ENCODE measurements at regions of chr7 and their contacts with region 1.

Region 1: DNA sequence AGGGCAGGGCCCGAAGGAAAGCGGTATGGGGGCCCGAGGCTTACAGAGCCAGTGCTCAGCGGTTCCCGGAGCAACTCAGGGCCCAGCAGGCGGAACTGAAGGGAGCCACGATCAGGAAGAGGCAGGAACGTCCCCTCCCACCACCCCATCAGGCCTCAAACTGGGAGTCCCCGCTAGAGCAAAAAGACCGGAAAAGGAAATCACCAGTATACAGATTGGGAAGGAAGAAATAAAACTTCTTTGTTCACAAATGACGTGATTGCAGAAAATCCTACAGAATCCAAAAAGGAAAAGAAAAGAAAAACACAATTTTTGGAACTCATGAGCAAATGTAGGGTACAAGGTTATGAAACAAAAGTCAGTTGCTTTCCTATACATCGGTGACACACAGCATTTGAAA is 21.6 kb upstream of the ZFAND2A start:
- DNase-seq: no peak
- H3K4me3 ChIP-seq: no peak overlapping the region
- H3K27ac ChIP-seq: no peak overlapping the region
- H3K4me1 ChIP-seq: no peaks in the 10 kb centered on the region; a peak in 1 of 4 replicates
- H3K27me3 ChIP-seq: peaks cover 25% of the 10 kb centered on the region
- CTCF ChIP-seq: no peak
- EP300 ChIP-seq: no peak
- RAD21 ChIP-seq: no peak

Region 2: DNA sequence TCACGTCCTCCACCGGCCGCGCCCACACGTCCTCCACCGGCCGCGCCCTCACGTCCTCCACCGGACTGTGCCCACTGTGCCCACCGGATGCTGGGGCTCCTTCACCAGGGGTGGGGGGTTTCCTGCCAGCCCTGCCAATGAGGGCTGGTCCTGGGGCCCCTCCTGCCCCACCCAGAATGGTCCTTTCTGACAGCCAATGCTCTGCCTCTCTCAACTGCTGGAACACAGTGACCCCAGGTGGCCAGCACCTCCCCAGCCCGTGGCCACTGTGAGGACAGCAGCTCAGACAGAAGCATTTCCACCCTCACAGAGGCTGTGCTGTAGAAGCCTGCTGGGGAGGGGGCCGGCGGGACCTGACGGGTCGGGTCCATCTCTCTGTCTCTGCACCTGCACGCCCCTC is 545.2 kb before region 1 on chr7:
- CTCF ChIA-PET with region 1: no interaction called
- POLR2A ChIA-PET with region 1: no interaction called
- DNase-seq: no peak
- H3K4me3 ChIP-seq: no peak overlapping the region
- H3K27ac ChIP-seq: no peak overlapping the region
- H3K4me1 ChIP-seq: peaks cover 0 to 6% of the 10 kb centered on the region in 2 experiments; a peak in 1 of 4 replicates
- H3K27me3 ChIP-seq: no peaks in the 10 kb centered on the region
- CTCF ChIP-seq: peak; percentile 50
- EP300 ChIP-seq: no peak
- RAD21 ChIP-seq: peak; percentile 14; the same call in 1 of the 2 replicates

Region 3: DNA sequence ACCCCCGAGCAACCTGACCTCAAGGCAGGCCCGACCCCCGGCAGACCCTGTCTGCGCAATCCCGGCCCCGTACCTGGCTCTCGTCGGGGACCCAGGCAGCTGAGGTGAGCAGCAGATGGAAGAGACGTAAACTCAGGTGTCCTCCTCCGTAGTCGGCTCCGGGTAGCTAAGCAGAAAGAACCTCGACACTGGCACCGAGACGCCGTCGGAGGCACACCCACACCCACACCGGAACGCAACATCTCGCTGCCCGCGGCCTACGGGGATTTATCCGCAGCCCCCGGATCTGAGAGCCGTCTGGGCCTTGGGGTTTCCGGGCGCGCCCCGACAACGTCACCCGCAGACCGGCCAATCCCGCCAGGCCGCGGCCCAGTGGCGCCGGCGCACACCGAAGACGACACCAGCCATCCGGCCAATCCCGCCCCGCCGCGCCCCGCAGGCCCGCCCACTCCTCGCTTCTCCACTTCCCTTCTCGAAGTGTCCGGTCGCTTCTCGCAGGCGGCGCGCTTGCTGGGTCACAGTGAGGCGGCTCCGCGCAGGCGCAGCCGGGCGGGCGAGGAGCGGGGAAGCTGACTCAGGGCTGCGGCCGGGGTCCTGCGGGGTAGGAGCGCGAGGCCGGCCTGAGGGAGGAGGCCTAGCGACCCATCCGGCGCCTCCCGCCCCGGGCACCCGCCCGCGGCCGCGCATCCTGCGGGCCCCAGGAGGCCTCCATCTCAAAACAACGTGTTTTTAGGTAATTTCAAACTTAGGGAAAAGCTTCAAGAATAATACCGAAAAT is 21.6 kb before region 1 on chr7 and contains the start of gene ZFAND2A:
- CTCF ChIA-PET with region 1: interaction called, 31 read pairs
- POLR2A ChIA-PET with region 1: no interaction called
- DNase-seq: peak; percentile 100
- H3K4me3 ChIP-seq: peak within 1 kb of the TSS; percentile 91 to 97
- H3K27ac ChIP-seq: peak within 1 kb of the TSS; percentile 81 to 94
- H3K4me1 ChIP-seq: peaks cover 14 to 16% of the 10 kb centered on the region in 2 experiments
- H3K27me3 ChIP-seq: no peaks in the 10 kb centered on the region
- CTCF ChIP-seq: no peak
- EP300 ChIP-seq: peak in 1 of 2 experiments; percentile 87; a peak in 2 of 4 replicates
- RAD21 ChIP-seq: no peak
- polyA plus RNA-seq, gene ZFAND2A: 38.9 and 48.5 TPM in 2 replicates

Region 4: GRCh38 chr7:1169409-1170368 is 12.0 kb before region 1 on chr7:
- CTCF ChIA-PET with region 1: interaction called, 73 read pairs
- POLR2A ChIA-PET with region 1: no interaction called
- DNase-seq: peak; percentile 86
- H3K4me3 ChIP-seq: peak overlapping the region in 1 of 2 experiments; percentile 31; a peak in 1 of 4 replicates
- H3K27ac ChIP-seq: no peak overlapping the region
- H3K4me1 ChIP-seq: peaks cover 0 to 2% of the 10 kb centered on the region in 2 experiments; a peak in 1 of 4 replicates
- H3K27me3 ChIP-seq: no peaks in the 10 kb centered on the region
- CTCF ChIP-seq: peak; percentile 72
- EP300 ChIP-seq: no peak
- RAD21 ChIP-seq: peak; percentile 14; the same call in 1 of the 2 replicates

Measured in SK-N-SH (cell line).